ENCODE measurements at regions of chr7 and their contacts with region 1.

Region 1: GRCh38 chr7:80883188-80884025 is 35.4 kb downstream of the SEMA3C start:
- DNase-seq: peak; percentile 98
- H3K4me3 Mint-ChIP-seq: peak overlapping the region; percentile 3
- H3K27ac Mint-ChIP-seq: peak overlapping the region; percentile 10
- H3K4me1 Mint-ChIP-seq: peaks cover 35% of the 10 kb centered on the region
- H3K27me3 Mint-ChIP-seq: no peaks in the 10 kb centered on the region
- CTCF ChIP-seq: no peak

Region 2: GRCh38 chr7:80826520-80827238 is 56.7 kb before region 1 on chr7:
- CTCF ChIA-PET with region 1: no interaction called
- POLR2A ChIA-PET with region 1: interaction called, 20 read pairs
- intact Hi-C with region 1: no loop called
- DNase-seq: peak; percentile 90
- H3K4me3 Mint-ChIP-seq: no peak overlapping the region
- H3K27ac Mint-ChIP-seq: no peak overlapping the region
- H3K4me1 Mint-ChIP-seq: peaks cover 44% of the 10 kb centered on the region
- H3K27me3 Mint-ChIP-seq: no peaks in the 10 kb centered on the region
- CTCF ChIP-seq: no peak

Region 3: DNA sequence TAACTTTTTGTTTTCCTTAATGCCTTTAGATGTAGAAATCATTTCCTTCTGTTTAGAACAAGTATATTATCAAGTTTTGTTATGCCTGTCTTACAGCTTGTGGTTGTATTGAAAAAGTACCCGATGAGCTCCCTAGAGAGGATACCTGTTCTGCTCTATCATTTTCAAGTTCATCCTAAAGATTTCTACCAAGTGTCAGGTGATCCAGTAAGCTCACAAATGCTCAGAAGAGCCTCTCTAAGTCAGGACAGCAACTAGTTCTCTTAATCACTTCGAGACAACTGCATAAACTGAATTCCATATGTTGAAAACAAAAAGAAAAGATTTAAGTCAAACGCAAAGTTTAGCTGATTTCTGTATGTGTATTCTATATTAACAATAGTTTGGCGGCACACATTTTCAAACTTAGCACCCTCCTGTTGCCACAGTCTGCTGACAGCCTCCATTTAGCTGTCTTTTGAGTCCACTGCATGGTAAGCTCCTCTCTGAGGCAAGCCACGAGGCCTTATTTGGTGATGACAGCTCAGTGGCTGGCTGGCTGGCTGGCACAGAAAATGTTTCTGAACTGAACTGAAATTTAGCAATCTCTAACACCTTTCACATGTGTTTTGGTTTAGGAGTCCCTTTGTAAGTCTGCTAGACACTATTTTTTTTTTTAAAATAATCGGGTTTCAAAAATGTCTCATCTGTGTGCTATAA is 24.0 kb before region 1 on chr7:
- CTCF ChIA-PET with region 1: interaction called, 4 read pairs
- POLR2A ChIA-PET with region 1: interaction called, 22 read pairs
- intact Hi-C with region 1: no loop called
- DNase-seq: peak; percentile 65
- H3K4me3 Mint-ChIP-seq: peak overlapping the region; percentile 27
- H3K27ac Mint-ChIP-seq: peak overlapping the region; percentile 94
- H3K4me1 Mint-ChIP-seq: peaks cover 37% of the 10 kb centered on the region
- H3K27me3 Mint-ChIP-seq: no peaks in the 10 kb centered on the region
- CTCF ChIP-seq: no peak

Region 4: GRCh38 chr7:80900583-80901576 is 17.5 kb after region 1 on chr7:
- CTCF ChIA-PET with region 1: no interaction called
- POLR2A ChIA-PET with region 1: interaction called, 48 read pairs
- intact Hi-C with region 1: no loop called
- DNase-seq: peak; percentile 87
- H3K4me3 Mint-ChIP-seq: no peak overlapping the region
- H3K27ac Mint-ChIP-seq: peak overlapping the region; percentile 85
- H3K4me1 Mint-ChIP-seq: peaks cover 49% of the 10 kb centered on the region
- H3K27me3 Mint-ChIP-seq: no peaks in the 10 kb centered on the region
- CTCF ChIP-seq: no peak